ENCODE measurements at regions of chr1 and their contacts with region 1.

Region 1: DNA sequence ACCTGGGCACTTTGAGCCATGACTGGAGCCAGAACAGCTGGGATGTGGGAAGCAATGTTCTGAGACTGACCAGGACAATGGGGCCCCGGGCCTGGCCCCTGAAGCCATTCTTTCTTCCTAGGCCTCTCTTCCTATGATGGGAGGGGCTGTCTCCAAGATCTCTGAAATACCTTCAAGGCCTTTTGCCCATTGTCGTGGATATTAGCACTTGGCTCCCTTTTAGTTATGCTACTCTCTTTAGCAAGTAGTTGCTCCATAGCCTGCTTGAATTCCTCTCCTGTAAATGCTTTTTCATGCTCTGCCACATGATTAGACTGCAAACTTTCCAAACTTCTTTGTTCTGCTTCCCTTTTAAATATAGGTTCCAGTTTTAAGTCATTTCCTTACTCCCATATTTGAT is 262.9 kb upstream of the CACYBP start:
- DNase-seq: no peak
- ATAC-seq: no peak
- H3K4me3 ChIP-seq: no peak overlapping the region
- H3K27ac ChIP-seq: no peak overlapping the region
- H3K4me1 ChIP-seq: no peaks in the 10 kb centered on the region
- H3K27me3 ChIP-seq: no peaks in the 10 kb centered on the region
- CTCF ChIP-seq: no peak

Region 2: DNA sequence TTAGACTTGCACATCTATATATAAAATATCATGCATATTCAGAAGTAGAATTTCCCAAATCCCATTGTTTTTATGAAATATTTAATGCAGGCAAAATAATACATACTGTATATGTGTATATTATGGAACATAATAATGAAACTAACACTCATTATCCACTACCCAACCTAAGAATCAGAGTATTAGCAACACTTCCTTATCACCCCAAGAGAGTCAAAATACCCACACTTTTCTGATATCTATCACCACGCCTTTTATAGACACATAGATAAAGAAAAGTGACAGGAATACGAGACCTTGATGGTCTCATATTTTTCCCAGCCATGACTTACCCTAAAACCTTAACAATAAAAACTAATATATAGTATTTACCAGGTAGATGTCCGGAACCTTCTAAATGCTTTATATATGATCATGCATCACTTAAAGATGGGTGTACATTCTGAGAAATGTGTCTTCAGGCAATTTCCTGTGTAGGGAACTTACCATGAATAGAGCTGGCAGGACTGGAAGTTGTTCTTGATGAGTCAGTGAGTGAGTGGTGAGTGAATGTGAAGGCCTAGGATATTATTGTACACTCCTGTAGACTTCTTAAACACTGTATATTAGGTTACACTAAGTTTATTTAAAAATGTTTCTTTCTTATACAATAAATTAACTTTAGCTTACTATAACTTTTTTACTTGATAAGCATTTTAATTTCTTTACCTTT is 1575.2 kb before region 1 on chr1:
- intact Hi-C with region 1: loop called in 1 of 2 experiments (anchors 10 kb)
- DNase-seq: no peak
- ATAC-seq: no peak
- H3K4me3 ChIP-seq: no peak overlapping the region
- H3K27ac ChIP-seq: no peak overlapping the region
- H3K4me1 ChIP-seq: no peaks in the 10 kb centered on the region
- H3K27me3 ChIP-seq: no peaks in the 10 kb centered on the region
- CTCF ChIP-seq: no peak

Region 3: DNA sequence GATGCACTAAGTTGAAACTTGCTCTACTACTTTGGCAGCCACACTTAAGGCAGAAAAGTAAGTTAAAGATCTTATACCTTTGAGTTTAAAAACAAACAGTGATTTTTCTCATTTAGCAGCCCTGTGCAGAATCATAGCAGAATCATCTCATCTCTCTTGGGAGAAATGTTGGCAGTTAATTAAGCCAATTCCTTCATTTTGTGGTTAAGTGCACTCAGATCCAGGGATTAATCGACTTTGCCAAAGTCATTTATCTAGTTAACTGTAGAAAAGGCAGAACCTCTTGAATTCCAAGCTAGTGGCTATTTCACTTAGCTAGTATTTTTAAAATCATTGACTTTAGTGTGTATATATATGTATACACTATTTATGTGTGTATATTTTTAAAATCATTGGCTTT is 164.1 kb before region 1 on chr1:
- intact Hi-C with region 1: no loop called
- DNase-seq: no peak
- ATAC-seq: no peak
- H3K4me3 ChIP-seq: no peak overlapping the region
- H3K27ac ChIP-seq: no peak overlapping the region
- H3K4me1 ChIP-seq: no peaks in the 10 kb centered on the region
- H3K27me3 ChIP-seq: no peaks in the 10 kb centered on the region
- CTCF ChIP-seq: no peak

Measured in psoas muscle (tissue), 8 donors.